ENCODE measurements at regions of chr12 and their contacts with region 1.

Region 1: GRCh38 chr12:69879041-69879960 is 54.3 kb downstream of the MYRFL start:
- ATAC-seq: peak; percentile 86 to 99 (median 96)
- H3K4me3 ChIP-seq: no peak overlapping the region
- H3K27ac ChIP-seq: no peak overlapping the region
- H3K4me1 ChIP-seq: no peaks in the 10 kb centered on the region

Region 2: DNA sequence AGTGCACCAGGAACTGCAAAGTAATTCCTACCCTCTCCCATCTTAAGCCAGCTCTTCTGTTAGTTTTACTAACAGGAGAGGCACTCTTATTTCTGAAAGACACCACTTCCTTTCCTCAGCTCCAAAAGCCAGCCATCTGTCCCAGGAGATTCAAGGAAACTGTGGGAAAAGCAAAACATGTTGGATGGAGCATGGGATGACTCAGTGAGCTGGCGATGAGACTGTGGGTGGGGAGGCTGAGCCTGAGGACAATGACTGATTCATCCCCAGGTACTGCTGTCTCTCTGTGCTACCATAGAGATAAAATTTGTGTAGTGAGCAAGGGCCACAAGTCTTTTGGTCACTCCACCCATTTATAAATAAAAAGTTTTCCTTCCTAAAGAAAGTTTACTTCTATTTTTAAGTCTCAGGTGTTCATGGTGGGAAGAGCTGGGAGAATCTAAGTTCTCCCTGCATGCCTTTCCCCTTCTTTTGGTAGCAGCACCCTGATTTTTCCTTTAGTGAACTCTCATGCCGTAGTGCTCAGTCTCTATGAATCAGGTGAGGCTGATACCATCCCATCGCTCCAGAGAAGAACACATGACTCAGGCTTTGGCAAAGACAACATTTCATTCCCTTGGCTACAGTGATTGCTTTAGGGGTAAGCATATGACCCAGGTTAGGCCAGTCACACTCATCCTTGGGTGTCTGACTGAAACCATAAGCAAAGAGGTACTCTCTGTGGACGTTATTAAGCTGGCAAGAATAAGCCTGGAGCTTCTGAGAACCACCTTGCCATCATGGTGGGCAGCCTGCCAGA is 87.3 kb after region 1 on chr12:
- in situ Hi-C with region 1: no loop called
- ATAC-seq: peak in 2 of 8 experiments; percentile 86 to 99
- H3K4me3 ChIP-seq: no peak overlapping the region
- H3K27ac ChIP-seq: no peak overlapping the region
- H3K4me1 ChIP-seq: no peaks in the 10 kb centered on the region

Region 3: DNA sequence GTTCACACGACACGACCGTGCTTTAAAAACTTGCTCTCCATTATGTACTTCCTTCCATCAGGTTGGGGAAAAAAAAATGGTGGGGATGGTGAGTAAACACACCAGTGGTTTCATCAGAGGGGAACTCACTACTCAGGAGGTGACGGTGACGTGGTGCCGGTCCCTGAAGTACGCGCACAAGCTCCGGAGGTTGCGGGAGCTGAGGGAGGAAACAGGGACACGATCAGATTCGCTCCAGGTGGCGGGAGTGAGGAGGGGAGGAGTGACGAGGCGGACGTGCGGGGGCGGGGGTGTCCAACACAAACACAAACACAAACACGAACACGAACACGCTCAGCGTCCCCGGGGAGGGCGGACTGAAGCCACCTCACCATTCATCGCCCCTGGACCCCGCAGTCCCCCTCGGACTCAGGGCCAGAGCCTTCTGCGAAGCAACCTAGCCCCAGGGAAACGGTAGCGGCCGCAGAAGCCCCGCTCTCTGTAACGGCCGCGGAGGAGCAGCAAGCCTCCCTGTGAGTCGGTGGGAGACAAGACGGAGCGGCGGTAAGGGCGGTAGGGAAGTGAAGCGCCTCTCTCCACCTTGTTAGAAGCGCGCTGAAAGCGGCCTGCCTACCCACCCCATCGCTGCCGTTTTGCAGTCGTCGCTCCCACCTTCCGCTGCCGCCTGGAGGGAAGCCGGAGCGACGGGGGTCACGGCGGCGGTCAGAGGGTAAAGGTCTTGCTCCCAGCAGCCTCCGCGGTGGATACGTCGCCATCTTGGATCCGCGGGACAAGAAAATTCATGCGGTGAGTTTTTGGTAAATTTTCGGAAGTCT is 363.6 kb after region 1 on chr12 and contains the start of gene CNOT2:
- in situ Hi-C with region 1: loop called in 1 of 9 experiments (anchors 25 kb)
- ATAC-seq: peak; percentile 72 to 87 (median 84)
- H3K4me3 ChIP-seq: peak within 1 kb of the TSS; percentile 81 to 98 (median 97)
- H3K27ac ChIP-seq: peak within 1 kb of the TSS; percentile 99
- H3K4me1 ChIP-seq: peaks cover 5 to 33% of the 10 kb centered on the region in 2 donors
- total RNA-seq, gene CNOT2: 67.9 to 163 (median 84.9) TPM

Region 4: GRCh38 chr12:70549340-70550179 is 670.3 kb after region 1 on chr12:
- in situ Hi-C with region 1: loop called in 1 of 9 experiments (anchors 25 kb)
- ATAC-seq: no peak
- H3K4me3 ChIP-seq: no peak overlapping the region
- H3K27ac ChIP-seq: no peak overlapping the region
- H3K4me1 ChIP-seq: peaks cover 0 to under 1% of the 10 kb centered on the region in 2 donors

Region 5: GRCh38 chr12:70590051-70590450 is 710.8 kb after region 1 on chr12:
- in situ Hi-C with region 1: loop called in 7 of 9 experiments (anchors 10 to 25 kb)
- ATAC-seq: peak in 4 of 8 experiments; percentile 61 to 92 (median 86)
- H3K4me3 ChIP-seq: no peak overlapping the region
- H3K27ac ChIP-seq: no peak overlapping the region
- H3K4me1 ChIP-seq: no peaks in the 10 kb centered on the region

Region 6: GRCh38 chr12:70733385-70733784 is 854.1 kb after region 1 on chr12:
- in situ Hi-C with region 1: loop called in 1 of 9 experiments (anchors 25 kb)
- ATAC-seq: peak; percentile 75 to 97 (median 90)
- H3K4me3 ChIP-seq: no peak overlapping the region
- H3K27ac ChIP-seq: no peak overlapping the region
- H3K4me1 ChIP-seq: peaks cover 0 to 3% of the 10 kb centered on the region in 2 donors

Measured in motor neuron (in vitro differentiated cells).